ENCODE measurements at regions of chr10 and their contacts with region 1.

Region 1: DNA sequence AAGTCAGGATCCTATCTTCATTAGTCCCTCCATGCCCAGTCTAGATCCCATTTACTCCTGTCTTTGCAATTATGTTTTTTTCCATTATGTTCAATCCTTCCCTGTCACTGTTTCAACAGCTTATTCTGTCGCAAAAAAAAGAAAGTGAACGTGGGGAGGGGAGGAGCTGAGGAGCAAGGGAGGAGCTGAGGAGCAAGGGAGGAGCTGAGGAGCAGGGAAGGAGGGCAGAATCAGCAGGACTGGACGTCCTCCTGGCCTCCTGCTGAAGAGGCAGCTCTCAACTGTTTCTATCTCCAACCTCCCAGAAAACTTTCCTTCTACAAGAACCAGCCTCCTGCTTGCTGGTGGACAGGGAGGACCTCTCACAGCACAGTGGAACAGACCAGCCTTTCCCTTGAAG is 26.0 kb downstream of the LARP4B start:
- DNase-seq: peak; percentile 16
- H3K4me3 Mint-ChIP-seq: no peak overlapping the region
- H3K27ac Mint-ChIP-seq: no peak overlapping the region
- H3K4me1 Mint-ChIP-seq: peaks cover 17% of the 10 kb centered on the region
- H3K27me3 Mint-ChIP-seq: no peaks in the 10 kb centered on the region
- CTCF ChIP-seq: no peak

Region 2: GRCh38 chr10:895319-895718 is 10.2 kb before region 1 on chr10:
- CTCF ChIA-PET with region 1: interaction called, 4 read pairs
- POLR2A ChIA-PET with region 1: interaction called, 11 read pairs
- intact Hi-C with region 1: no loop called
- DNase-seq: no peak
- H3K4me3 Mint-ChIP-seq: no peak overlapping the region
- H3K27ac Mint-ChIP-seq: no peak overlapping the region
- H3K4me1 Mint-ChIP-seq: peaks cover 12% of the 10 kb centered on the region
- H3K27me3 Mint-ChIP-seq: no peaks in the 10 kb centered on the region
- CTCF ChIP-seq: no peak

Region 3: DNA sequence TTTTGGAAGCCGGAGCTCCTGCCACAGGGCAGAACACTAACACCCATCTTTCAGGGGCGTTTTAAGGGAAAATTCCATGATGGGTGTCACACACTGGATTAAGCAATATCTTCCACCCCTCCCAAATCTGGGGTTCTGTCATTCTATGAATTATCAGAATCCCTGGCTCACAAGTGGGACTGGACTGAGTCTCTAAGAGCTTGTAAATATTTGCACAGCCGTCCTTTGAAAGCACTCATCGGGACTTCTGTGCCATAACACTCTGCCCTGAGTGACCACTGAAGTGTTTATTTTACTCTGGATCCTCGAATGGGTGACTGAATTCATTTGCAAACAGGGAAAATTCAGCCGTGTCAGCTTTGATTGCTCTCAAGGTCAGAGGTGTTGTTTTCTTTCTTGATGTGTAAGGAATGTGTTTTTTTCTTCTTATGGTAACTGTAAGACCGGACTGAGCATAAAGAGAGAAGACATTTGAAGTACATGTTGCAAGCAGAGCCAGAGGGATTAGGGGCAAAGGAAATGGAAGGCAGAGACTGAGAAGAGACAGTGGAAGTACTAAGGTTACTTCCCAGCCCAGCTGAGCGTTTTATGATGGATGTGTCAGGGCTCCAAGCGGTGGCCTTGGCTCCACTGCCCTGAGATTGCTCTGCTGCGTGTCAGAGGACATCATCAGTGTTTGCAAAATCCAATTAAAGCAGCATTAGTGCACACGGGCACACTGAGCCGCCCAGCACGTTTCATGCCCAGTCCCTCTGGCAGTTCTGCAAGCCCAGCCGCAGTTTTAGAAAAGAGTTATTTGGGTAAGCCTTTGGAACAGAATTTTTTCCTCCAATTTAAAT is 65.0 kb after region 1 on chr10:
- CTCF ChIA-PET with region 1: no interaction called
- POLR2A ChIA-PET with region 1: no interaction called
- intact Hi-C with region 1: no loop called
- DNase-seq: no peak
- H3K4me3 Mint-ChIP-seq: no peak overlapping the region
- H3K27ac Mint-ChIP-seq: no peak overlapping the region
- H3K4me1 Mint-ChIP-seq: no peaks in the 10 kb centered on the region
- H3K27me3 Mint-ChIP-seq: peaks cover 31% of the 10 kb centered on the region
- CTCF ChIP-seq: no peak